Dorsolateral prefrontal cortex (tissue), 120 donors: ENCODE measurements at regions of chr16 and their contacts with region 1.

Region 1: DNA sequence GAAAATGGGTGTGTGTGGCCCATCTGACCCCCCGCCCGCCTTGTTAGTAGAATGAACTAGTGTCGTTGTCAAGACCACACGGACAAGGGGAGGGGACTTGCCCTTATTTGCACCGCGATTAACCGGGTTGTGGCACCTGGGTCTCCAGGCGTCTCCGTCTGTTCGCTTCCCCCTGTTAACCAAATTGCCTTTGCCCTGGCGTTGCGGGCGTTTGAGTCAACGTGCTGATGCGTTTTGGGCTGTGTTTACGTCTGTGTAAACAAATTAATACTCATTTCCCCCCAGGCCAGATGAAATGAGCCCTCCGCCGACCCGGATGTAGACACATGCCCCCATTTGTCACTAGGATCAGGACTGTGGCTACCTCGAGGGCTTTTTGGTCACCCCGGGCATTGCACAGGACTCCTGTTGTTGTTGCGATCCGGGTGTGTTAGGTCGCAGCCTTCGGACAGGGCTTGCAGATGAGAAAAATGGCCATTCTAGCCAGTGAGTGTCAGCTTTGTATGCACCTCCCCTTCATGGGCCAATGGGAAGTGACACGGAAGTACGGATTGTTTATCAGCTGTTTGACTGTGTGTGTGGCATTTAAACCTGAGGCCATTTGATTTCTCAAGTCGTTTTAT is 906 bp downstream of the RBL2 start:
- DNase-seq: peak; percentile 29 to 89 (median 70)
- H3K4me3 ChIP-seq: peak overlapping the region; percentile 73 to 100 (median 97)
- H3K27ac ChIP-seq: peak overlapping the region; percentile 38 to 98 (median 95)
- H3K27me3 ChIP-seq: no peaks in the 10 kb centered on the region
- CTCF ChIP-seq: peak in 5 of 56 donors; percentile 6 to 28 (median 23)

Region 2: DNA sequence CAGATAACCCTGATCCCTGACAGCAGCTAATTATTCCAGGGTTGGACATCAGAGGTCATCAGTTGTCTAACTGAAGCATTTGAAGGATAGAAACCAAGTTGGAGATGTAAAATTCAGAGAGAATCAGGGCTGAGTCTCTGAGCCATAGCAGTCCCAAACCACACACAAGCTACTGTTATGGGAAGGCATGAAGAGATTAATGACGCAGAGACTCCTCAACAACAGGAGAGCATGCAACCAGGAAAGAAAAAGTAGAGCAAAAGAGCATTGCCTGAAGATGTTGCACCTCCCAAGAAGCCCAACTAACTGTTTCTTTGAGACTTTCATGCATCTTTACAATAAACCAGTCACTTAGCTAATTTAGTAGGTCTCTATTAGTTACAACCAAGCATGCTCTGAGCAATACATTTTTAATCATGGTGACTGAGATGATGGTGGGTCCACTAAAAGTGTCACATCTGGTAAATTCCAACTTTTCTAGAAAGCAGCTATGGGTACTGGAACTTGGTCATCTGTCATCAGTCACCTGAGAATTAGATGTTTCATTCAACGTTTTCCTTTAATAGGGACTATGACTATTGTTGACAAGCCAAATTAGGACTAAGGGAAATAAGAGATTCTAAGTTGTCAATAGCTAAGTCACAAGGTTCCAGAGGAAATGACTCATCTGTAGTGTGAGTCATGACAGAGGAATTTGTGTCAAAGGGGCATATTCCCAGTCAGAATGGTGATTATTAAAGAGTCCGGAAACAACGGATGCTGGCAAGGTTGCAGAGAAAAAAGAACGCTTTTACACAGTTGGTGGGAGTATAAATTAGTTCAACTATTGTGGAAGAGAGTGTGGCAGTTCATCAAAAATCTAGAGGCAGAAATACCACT is 622.3 kb before region 1 on chr16:
- intact Hi-C with region 1: no loop called
- DNase-seq: no peak
- H3K4me3 ChIP-seq: no peak overlapping the region
- H3K27ac ChIP-seq: no peak overlapping the region
- H3K27me3 ChIP-seq: peaks cover 0 to 8% (median 0%) of the 10 kb centered on the region in 45 donors
- CTCF ChIP-seq: no peak

Region 3: GRCh38 chr16:53465606-53466280 is 30.6 kb after region 1 on chr16:
- intact Hi-C with region 1: no loop called
- DNase-seq: no peak
- H3K4me3 ChIP-seq: no peak overlapping the region
- H3K27ac ChIP-seq: no peak overlapping the region
- H3K27me3 ChIP-seq: no peaks in the 10 kb centered on the region
- CTCF ChIP-seq: no peak

Region 4: DNA sequence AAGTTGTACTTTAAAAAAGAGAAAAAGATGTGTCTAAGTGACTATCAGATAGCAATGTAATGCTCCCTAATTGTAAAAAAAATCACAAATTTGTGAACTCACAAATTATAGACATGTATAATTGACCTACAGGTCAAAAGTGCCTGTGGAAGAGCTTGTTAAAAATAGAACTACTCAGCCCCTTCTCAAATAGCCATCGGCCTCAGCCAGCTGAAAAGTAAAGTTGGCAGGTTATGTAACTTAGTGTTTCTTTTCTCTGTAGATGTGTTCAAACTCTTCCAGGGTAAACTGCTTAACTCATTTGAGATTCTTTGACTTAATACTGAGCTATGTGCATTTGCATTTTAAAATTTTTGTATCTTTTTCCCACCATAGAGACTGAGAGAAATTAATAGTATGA is 54.6 kb after region 1 on chr16:
- intact Hi-C with region 1: no loop called
- DNase-seq: no peak
- H3K4me3 ChIP-seq: no peak overlapping the region
- H3K27ac ChIP-seq: peak overlapping the region in 16 of 59 donors; percentile 1 to 68 (median 24)
- H3K27me3 ChIP-seq: no peaks in the 10 kb centered on the region
- CTCF ChIP-seq: no peak

Region 5: GRCh38 chr16:53503270-53503923 is 68.2 kb after region 1 on chr16:
- intact Hi-C with region 1: loop called (anchors 1 to 2 kb)
- DNase-seq: peak; percentile 100
- H3K4me3 ChIP-seq: peak overlapping the region; percentile 71 to 98 (median 91)
- H3K27ac ChIP-seq: peak overlapping the region; percentile 86 to 100 (median 98)
- H3K27me3 ChIP-seq: no peaks in the 10 kb centered on the region
- CTCF ChIP-seq: peak in 13 of 56 donors; percentile 3 to 35 (median 14)

Region 6: GRCh38 chr16:53509906-53510703 is 74.9 kb after region 1 on chr16:
- intact Hi-C with region 1: loop called in 1 of 2 experiments (anchors 2 kb)
- DNase-seq: peak in 9 of 10 donors; percentile 35 to 77 (median 67)
- H3K4me3 ChIP-seq: peak overlapping the region in 26 of 59 donors; percentile 4 to 48 (median 25)
- H3K27ac ChIP-seq: peak overlapping the region in 23 of 59 donors; percentile 0 to 60 (median 33)
- H3K27me3 ChIP-seq: no peaks in the 10 kb centered on the region
- CTCF ChIP-seq: peak; percentile 76 to 99 (median 93)

Region 7: DNA sequence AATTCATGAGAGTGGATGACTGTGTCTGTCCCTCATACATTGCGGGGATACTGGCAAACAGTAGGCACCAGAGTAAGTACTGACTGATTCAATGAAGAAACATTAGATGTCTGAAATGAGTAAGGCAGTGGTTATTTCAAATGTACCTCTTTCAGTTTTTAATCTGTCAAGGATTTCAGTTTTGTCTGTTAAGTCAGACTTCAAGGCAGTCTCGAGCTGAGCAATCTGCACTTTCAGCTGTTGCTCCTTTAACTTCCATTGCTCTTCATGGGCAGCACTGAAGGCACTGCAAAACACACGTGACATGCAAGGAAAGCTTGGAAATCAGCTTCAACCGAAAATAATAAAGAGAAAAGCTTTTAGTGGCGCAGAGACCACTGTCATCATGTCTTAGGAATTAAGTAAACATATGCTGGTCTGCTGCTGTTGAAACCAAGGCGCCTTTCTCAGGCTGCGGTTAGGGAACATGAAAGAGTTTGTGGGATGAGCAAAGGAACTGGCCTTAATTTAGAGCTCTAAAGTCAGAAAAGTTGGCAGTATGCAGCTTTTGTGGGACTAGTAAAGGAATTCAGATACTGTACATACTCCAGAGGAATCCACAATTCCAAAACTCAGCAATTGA is 229.7 kb after region 1 on chr16:
- intact Hi-C with region 1: no loop called
- DNase-seq: no peak
- H3K4me3 ChIP-seq: no peak overlapping the region
- H3K27ac ChIP-seq: no peak overlapping the region
- H3K27me3 ChIP-seq: no peaks in the 10 kb centered on the region
- CTCF ChIP-seq: no peak